A549 (cell line): ENCODE measurements at regions of chr19 and their contacts with region 1.

Region 1: GRCh38 chr19:29680447-29680846 is 15.2 kb downstream of the PLEKHF1 start:
- DNase-seq: no peak
- ATAC-seq: peak in 1 of 2 experiments; percentile 3; a peak in 3 of 6 replicates
- H3K4me3 ChIP-seq: no peak overlapping the region
- H3K27ac ChIP-seq: no peak overlapping the region
- H3K4me1 ChIP-seq: no peaks in the 10 kb centered on the region
- CTCF ChIP-seq: no peak
- EP300 ChIP-seq: no peak
- POLR2A ChIP-seq: no peak
- RAD21 ChIP-seq: no peak

Region 2: GRCh38 chr19:29564574-29565005 is 115.9 kb before region 1 on chr19:
- CTCF ChIA-PET with region 1: no interaction called
- POLR2A ChIA-PET with region 1: no interaction called
- DNase-seq: no peak
- ATAC-seq: no peak
- H3K4me3 ChIP-seq: no peak overlapping the region
- H3K27ac ChIP-seq: no peak overlapping the region
- H3K4me1 ChIP-seq: no peaks in the 10 kb centered on the region
- CTCF ChIP-seq: no peak
- EP300 ChIP-seq: no peak
- POLR2A ChIP-seq: no peak
- RAD21 ChIP-seq: no peak

Region 3: GRCh38 chr19:29665215-29665825 is 15.1 kb before region 1 on chr19 and contains the start of gene PLEKHF1:
- CTCF ChIA-PET with region 1: interaction called, 11 read pairs
- POLR2A ChIA-PET with region 1: interaction called, 3 read pairs
- DNase-seq: peak; percentile 85 to 98
- ATAC-seq: peak; percentile 87 to 97
- H3K4me3 ChIP-seq: peak within 1 kb of the TSS; percentile 82
- H3K27ac ChIP-seq: peak within 1 kb of the TSS; percentile 74 to 86
- H3K4me1 ChIP-seq: peaks cover 19% of the 10 kb centered on the region
- CTCF ChIP-seq: no peak
- EP300 ChIP-seq: no peak
- POLR2A ChIP-seq: peak; percentile 35; the same call in 1 of the 2 replicates
- RAD21 ChIP-seq: no peak
- polyA plus RNA-seq, gene PLEKHF1: 2.1 and 2.3 TPM in 2 replicates